Left ventricle myocardium inferior (tissue), 1 donor: ENCODE measurements at regions of chr6 and their contacts with region 1.

Region 1: GRCh38 chr6:163496205-163496604 is 81.7 kb downstream of the QKI start:
- DNase-seq: no peak
- H3K4me3 ChIP-seq: no peak overlapping the region
- H3K27ac ChIP-seq: no peak overlapping the region
- H3K4me1 ChIP-seq: peaks cover 100% of the 10 kb centered on the region
- H3K27me3 ChIP-seq: no peaks in the 10 kb centered on the region
- CTCF ChIP-seq: no peak

Region 2: GRCh38 chr6:163427498-163428254 is 68.5 kb before region 1 on chr6:
- intact Hi-C with region 1: loop called (anchors 2 kb)
- DNase-seq: no peak
- H3K4me3 ChIP-seq: peak overlapping the region; percentile 34
- H3K27ac ChIP-seq: peak overlapping the region; percentile 24
- H3K4me1 ChIP-seq: peaks cover 100% of the 10 kb centered on the region
- H3K27me3 ChIP-seq: no peaks in the 10 kb centered on the region
- CTCF ChIP-seq: peak; percentile 52

Region 3: DNA sequence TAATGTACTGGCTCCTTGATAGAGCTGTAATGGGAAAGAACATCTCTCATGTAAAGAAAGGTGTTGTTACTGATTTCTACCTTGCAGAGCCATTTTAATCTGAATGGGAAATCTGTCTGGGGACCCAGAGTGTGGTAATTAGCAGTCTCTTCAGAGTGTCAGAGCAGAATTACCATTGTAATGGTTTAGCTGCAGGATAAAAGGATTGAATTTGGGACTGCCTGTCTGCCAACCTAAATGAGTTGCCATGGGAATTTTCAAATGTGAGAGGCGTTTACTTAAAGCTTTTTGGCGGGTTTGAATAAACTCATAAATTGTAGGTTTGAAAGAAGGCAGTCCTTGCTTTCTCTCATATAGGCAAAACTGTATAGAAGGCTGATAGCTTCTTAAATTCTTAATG is 47.1 kb after region 1 on chr6:
- intact Hi-C with region 1: no loop called
- DNase-seq: no peak
- H3K4me3 ChIP-seq: no peak overlapping the region
- H3K27ac ChIP-seq: no peak overlapping the region
- H3K4me1 ChIP-seq: peaks cover 99% of the 10 kb centered on the region
- H3K27me3 ChIP-seq: no peaks in the 10 kb centered on the region
- CTCF ChIP-seq: no peak